ENCODE measurements at regions of chr17 and their contacts with region 1.

Region 1: GRCh38 chr17:28041068-28041843 is 1.2 kb upstream of the NLK start:
- DNase-seq: peak; percentile 100
- H3K4me3 Mint-ChIP-seq: peak overlapping the region; percentile 79
- H3K27ac Mint-ChIP-seq: peak overlapping the region; percentile 80
- H3K4me1 Mint-ChIP-seq: peaks cover 46% of the 10 kb centered on the region
- H3K27me3 Mint-ChIP-seq: peaks cover 10% of the 10 kb centered on the region

Region 2: DNA sequence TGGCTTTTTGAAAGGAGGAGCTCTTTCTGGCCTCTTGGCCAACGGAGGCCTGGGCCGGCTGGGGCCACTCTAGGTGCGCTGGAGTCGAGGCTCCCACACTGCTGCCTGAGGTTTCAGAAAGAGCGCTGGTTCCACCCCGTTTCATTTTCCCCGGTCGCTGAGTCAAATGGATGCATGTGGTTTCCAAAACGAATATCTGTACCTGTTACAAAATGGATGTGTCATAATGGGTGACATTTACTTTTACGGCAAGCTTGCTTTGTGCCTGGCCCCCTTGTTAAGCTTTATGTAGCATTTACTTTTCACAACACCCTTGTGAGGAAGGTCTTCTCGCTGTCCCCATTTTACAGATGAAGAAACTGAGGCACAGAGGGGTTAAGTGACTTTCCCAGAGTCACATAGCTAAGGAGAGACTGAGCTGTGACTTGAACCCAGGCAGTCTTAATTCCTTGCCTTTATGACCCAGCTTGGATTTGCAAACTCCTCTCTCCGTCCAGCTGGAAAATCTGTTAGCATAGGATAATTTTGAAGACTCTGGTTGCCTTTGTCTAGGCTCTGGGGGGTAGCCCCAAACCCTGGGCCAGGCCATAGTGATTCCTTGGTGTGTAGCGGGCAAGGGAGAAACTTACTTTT is 574.4 kb before region 1 on chr17:
- intact Hi-C with region 1: loop called (anchors 5 kb)
- DNase-seq: peak; percentile 74
- H3K4me3 Mint-ChIP-seq: peak overlapping the region; percentile 79
- H3K27ac Mint-ChIP-seq: peak overlapping the region; percentile 97
- H3K4me1 Mint-ChIP-seq: peaks cover 88% of the 10 kb centered on the region
- H3K27me3 Mint-ChIP-seq: no peaks in the 10 kb centered on the region

Region 3: GRCh38 chr17:27929990-27930389 is 111.3 kb before region 1 on chr17:
- intact Hi-C with region 1: no loop called
- DNase-seq: no peak
- H3K4me3 Mint-ChIP-seq: no peak overlapping the region
- H3K27ac Mint-ChIP-seq: no peak overlapping the region
- H3K4me1 Mint-ChIP-seq: no peaks in the 10 kb centered on the region
- H3K27me3 Mint-ChIP-seq: peaks cover 14% of the 10 kb centered on the region

Region 4: GRCh38 chr17:28057731-28058279 is 16.5 kb after region 1 on chr17:
- intact Hi-C with region 1: loop called (anchors 1 kb)
- DNase-seq: no peak
- H3K4me3 Mint-ChIP-seq: no peak overlapping the region
- H3K27ac Mint-ChIP-seq: peak overlapping the region; percentile 85
- H3K4me1 Mint-ChIP-seq: peaks cover 35% of the 10 kb centered on the region
- H3K27me3 Mint-ChIP-seq: no peaks in the 10 kb centered on the region

Region 5: DNA sequence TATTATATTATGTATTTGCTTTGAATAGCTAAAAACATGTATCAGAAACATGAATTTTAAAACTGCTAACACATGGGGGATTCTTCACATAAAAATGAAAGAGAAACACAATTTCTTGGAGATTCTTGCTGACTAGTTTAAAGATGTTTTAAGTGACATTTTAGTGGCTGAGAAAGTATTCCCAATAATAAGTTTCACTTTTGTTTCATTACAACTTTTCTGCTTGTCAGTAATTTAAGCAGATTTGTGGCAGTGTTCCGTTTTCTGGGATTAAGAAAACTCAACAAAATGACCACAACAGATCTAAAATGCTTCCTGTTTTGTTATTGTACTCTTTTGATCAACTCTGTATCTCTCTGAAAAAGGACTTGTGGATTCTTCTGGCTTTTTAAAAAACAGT is 77.1 kb after region 1 on chr17:
- intact Hi-C with region 1: loop called (anchors 5 kb)
- DNase-seq: no peak
- H3K4me3 Mint-ChIP-seq: peak overlapping the region; percentile 59
- H3K27ac Mint-ChIP-seq: peak overlapping the region; percentile 36
- H3K4me1 Mint-ChIP-seq: peaks cover 43% of the 10 kb centered on the region
- H3K27me3 Mint-ChIP-seq: no peaks in the 10 kb centered on the region

Region 6: GRCh38 chr17:28252436-28252835 is 211.2 kb after region 1 on chr17:
- intact Hi-C with region 1: loop called (anchors 1 kb)
- DNase-seq: no peak
- H3K4me3 Mint-ChIP-seq: no peak overlapping the region
- H3K27ac Mint-ChIP-seq: no peak overlapping the region
- H3K4me1 Mint-ChIP-seq: peaks cover 8% of the 10 kb centered on the region
- H3K27me3 Mint-ChIP-seq: peaks cover 14% of the 10 kb centered on the region

Region 7: DNA sequence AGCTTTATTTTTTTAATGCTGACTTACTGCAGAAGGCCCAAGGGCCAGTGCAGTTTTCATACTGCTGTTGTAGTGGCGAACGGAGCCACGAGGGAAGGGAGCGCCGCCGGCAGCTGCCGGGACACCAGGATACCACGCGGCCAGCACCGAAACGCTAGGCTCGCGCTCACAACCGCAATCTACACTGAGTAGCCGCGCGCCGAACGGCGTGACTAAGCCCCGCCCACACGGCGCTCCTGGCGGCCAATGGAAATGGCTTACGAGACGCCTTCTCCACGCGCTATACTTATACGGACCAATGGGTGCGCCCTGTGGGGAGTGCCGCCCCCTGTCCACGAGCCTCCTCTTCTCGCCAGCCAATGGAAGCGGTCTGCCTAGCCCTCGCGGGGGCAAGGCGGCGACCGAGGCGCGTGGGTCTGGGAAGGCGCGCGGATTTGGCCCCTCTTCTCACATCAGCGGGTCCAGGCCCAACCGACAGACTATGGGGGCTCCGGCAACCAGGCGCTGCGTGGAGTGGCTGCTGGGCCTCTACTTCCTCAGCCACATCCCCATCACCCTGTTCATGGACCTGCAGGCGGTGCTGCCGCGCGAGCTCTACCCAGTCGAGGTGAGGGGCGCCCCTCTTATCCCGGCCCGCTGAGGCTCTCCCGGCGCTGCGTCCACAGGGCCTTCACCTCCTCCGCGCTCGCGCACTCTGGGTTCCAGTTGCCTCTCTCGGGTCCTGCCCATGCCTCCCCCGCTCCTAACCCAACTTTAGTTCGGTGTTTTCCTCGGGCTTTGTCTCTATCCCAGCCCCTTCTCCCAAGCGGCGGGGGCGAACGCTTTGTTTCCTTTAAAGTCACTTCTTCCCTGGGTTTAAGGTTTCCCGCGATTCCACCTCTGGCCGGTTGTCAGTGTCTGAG is 277.8 kb after region 1 on chr17 and contains the start of gene TMEM97:
- intact Hi-C with region 1: loop called (anchors 2 kb)
- DNase-seq: peak; percentile 96
- H3K4me3 Mint-ChIP-seq: peak within 1 kb of the TSS; percentile 96
- H3K27ac Mint-ChIP-seq: peak within 1 kb of the TSS; percentile 94
- H3K4me1 Mint-ChIP-seq: peaks cover 48% of the 10 kb centered on the region
- H3K27me3 Mint-ChIP-seq: no peaks in the 10 kb centered on the region
- total RNA-seq, gene TMEM97: 60.9 and 64.5 TPM in 2 replicates